ENCODE measurements at regions of chr20 and their contacts with region 1.

Region 1: DNA sequence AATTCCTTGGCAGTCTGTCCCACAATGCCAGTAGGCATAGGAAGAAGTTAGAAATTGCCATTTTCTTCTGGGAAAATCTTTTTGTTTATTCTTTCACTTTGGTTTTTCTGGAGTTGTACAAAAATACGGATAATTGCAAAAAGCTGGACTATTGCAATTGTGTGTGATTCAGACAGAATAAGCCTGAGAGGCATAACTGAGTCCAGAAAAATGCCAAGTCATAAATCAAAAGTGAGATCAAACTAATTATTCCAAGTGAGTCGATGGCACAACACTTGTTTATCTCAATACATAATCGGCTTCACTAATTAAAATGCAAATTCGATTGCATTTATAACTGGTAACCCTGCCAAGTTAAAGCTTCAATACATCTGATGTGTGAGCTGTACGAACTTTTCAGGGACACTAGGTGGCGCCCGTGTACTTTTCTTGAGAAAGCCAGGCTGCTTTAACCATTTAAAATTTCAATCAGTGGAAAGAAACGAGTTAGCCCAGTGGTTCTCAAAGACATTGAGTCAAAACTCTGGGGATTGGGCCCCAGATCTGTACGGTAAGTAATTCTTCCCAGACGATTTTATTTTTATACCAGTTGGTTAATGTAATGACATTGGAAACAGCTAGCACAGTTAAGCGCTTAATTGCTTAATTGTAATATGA is 102.6 kb downstream of the LAMP5 start:
- DNase-seq: peak; percentile 81
- H3K4me3 ChIP-seq: no peak overlapping the region
- H3K27ac ChIP-seq: no peak overlapping the region
- H3K4me1 ChIP-seq: no peaks in the 10 kb centered on the region
- H3K27me3 ChIP-seq: peaks cover 30% of the 10 kb centered on the region

Region 2: GRCh38 chr20:8756410-8756809 is 860.6 kb before region 1 on chr20:
- in situ Hi-C with region 1: loop called (anchors 25 kb)
- DNase-seq: peak; percentile 98
- H3K4me3 ChIP-seq: no peak overlapping the region
- H3K27ac ChIP-seq: peak overlapping the region; percentile 72
- H3K4me1 ChIP-seq: peaks cover 18% of the 10 kb centered on the region
- H3K27me3 ChIP-seq: no peaks in the 10 kb centered on the region

Region 3: GRCh38 chr20:9723501-9724202 is 106.7 kb after region 1 on chr20:
- in situ Hi-C with region 1: no loop called
- DNase-seq: peak; percentile 0
- H3K4me3 ChIP-seq: no peak overlapping the region
- H3K27ac ChIP-seq: no peak overlapping the region
- H3K4me1 ChIP-seq: no peaks in the 10 kb centered on the region
- H3K27me3 ChIP-seq: no peaks in the 10 kb centered on the region

Measured in GM23248 (cell line).